CD8-positive, alpha-beta memory T cell (primary cell): ENCODE measurements at regions of chr19 and their contacts with region 1.

Region 1: GRCh38 chr19:12757544-12758274 is 6.1 kb downstream of the BEST2 start:
- DNase-seq: peak; percentile 45 to 65 (median 54)
- H3K4me3 ChIP-seq: no peak overlapping the region
- H3K4me3 Mint-ChIP-seq: peak overlapping the region in 3 of 7 donors; percentile 15 to 50 (median 23)
- H3K27ac ChIP-seq: no peak overlapping the region
- H3K27ac Mint-ChIP-seq: no peak overlapping the region
- H3K4me1 ChIP-seq: peaks cover 9% of the 10 kb centered on the region
- H3K4me1 Mint-ChIP-seq: peaks cover 5 to 8% (median 8%) of the 10 kb centered on the region in 3 donors
- H3K27me3 ChIP-seq: peaks cover 4% of the 10 kb centered on the region
- H3K27me3 Mint-ChIP-seq: peaks cover 19 to 32% of the 10 kb centered on the region in 2 donors

Region 2: DNA sequence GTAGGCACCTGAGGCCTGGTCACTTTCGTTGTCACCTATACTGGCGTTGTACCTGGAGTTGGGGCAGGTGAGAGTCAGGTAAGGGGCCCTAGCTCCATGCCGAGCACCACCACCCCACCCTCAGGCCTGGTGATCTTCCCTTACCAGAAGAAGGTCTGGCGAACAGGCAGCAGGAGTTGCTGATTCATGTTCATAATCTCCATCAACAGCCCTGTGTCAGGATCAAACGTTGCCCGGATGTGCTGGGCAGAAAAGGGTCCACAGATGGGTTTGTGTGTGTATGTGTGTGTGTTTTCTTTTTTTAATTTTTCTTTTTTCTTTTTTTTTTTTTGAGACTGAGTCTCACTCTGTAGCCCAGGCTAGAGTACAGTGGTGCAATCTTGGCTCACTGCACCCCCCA is 105.5 kb before region 1 on chr19:
- CTCF ChIA-PET with region 1: no interaction called
- POLR2A ChIA-PET with region 1: no interaction called
- DNase-seq: no peak
- H3K4me3 ChIP-seq: no peak overlapping the region
- H3K4me3 Mint-ChIP-seq: no peak overlapping the region
- H3K27ac ChIP-seq: no peak overlapping the region
- H3K27ac Mint-ChIP-seq: peak overlapping the region in 1 of 8 donors; percentile 54
- H3K4me1 ChIP-seq: no peaks in the 10 kb centered on the region
- H3K4me1 Mint-ChIP-seq: peaks cover 0 to 1% (median 0%) of the 10 kb centered on the region in 3 donors
- H3K27me3 ChIP-seq: no peaks in the 10 kb centered on the region
- H3K27me3 Mint-ChIP-seq: no peaks in the 10 kb centered on the region

Region 3: GRCh38 chr19:12703046-12703445 is 54.7 kb before region 1 on chr19:
- CTCF ChIA-PET with region 1: no interaction called
- POLR2A ChIA-PET with region 1: no interaction called
- DNase-seq: peak in 1 of 5 donors; percentile 27
- H3K4me3 ChIP-seq: no peak overlapping the region
- H3K4me3 Mint-ChIP-seq: no peak overlapping the region
- H3K27ac ChIP-seq: no peak overlapping the region
- H3K27ac Mint-ChIP-seq: peak overlapping the region in 1 of 8 donors; percentile 23
- H3K4me1 ChIP-seq: no peaks in the 10 kb centered on the region
- H3K4me1 Mint-ChIP-seq: peaks cover 2 to 4% (median 2%) of the 10 kb centered on the region in 3 donors
- H3K27me3 ChIP-seq: no peaks in the 10 kb centered on the region
- H3K27me3 Mint-ChIP-seq: no peaks in the 10 kb centered on the region

Region 4: GRCh38 chr19:12716861-12717260 is 40.8 kb before region 1 on chr19:
- CTCF ChIA-PET with region 1: interaction called, 16 read pairs
- POLR2A ChIA-PET with region 1: no interaction called
- DNase-seq: peak in 3 of 5 donors; percentile 30 to 55 (median 41)
- H3K4me3 ChIP-seq: no peak overlapping the region
- H3K4me3 Mint-ChIP-seq: peak overlapping the region in 1 of 7 donors; percentile 9
- H3K27ac ChIP-seq: no peak overlapping the region
- H3K27ac Mint-ChIP-seq: peak overlapping the region in 3 of 8 donors; percentile 7 to 55 (median 49)
- H3K4me1 ChIP-seq: peaks cover 6% of the 10 kb centered on the region
- H3K4me1 Mint-ChIP-seq: peaks cover 14 to 25% (median 19%) of the 10 kb centered on the region in 3 donors
- H3K27me3 ChIP-seq: no peaks in the 10 kb centered on the region
- H3K27me3 Mint-ChIP-seq: peaks cover 0 to 3% of the 10 kb centered on the region in 2 donors

Region 5: GRCh38 chr19:12745166-12745897 is 12.4 kb before region 1 on chr19:
- CTCF ChIA-PET with region 1: interaction called, 10 read pairs
- POLR2A ChIA-PET with region 1: interaction called, 5 read pairs
- DNase-seq: no peak
- H3K4me3 ChIP-seq: no peak overlapping the region
- H3K4me3 Mint-ChIP-seq: no peak overlapping the region
- H3K27ac ChIP-seq: no peak overlapping the region
- H3K27ac Mint-ChIP-seq: no peak overlapping the region
- H3K4me1 ChIP-seq: no peaks in the 10 kb centered on the region
- H3K4me1 Mint-ChIP-seq: peaks cover 5 to 11% (median 9%) of the 10 kb centered on the region in 3 donors
- H3K27me3 ChIP-seq: no peaks in the 10 kb centered on the region
- H3K27me3 Mint-ChIP-seq: peaks cover 0 to 1% of the 10 kb centered on the region in 2 donors

Region 6: DNA sequence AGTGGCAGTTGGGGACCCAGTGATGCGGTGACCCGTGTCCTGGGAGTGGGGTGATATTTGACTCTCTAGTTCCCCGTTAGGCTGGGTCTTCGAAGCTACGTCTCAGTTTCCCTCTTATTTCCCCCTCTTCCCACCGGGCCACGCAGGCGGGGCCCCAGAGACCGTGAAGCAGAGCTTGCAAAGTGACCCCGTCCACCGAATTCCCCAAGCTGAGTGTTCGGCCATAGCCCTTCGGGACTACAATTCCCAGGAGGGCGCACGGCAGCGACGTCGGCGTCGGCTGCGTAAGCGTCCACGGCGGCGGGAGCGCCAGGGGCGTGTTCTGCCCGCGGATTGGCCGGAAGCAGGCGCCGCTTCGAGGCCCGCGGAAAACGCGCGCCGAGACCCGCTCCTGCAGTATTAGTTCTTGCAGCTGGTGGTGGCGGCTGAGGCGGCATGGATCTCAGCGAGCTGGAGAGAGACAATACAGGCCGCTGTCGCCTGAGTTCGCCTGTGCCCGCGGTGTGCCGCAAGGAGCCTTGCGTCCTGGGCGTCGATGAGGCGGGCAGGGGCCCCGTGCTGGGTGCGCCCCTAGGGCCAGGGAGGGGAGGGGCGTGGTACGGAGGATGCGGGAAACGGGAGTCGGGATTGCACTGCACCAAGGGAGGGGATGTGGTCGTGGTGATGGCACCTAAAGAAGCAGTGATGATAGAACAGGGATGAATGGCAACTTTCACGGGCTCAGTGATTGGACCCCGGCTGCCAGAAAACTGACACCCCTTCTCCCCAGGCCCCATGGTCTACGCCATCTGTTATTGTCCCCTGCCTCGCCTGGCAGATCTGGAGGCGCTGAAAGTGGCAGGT is 48.8 kb after region 1 on chr19 and contains the start of gene RNASEH2A:
- CTCF ChIA-PET with region 1: interaction called, 326 read pairs
- POLR2A ChIA-PET with region 1: no interaction called
- DNase-seq: peak; percentile 79 to 88 (median 81)
- H3K4me3 ChIP-seq: peak within 1 kb of the TSS; percentile 59
- H3K4me3 Mint-ChIP-seq: peak within 1 kb of the TSS; percentile 89 to 95 (median 92)
- H3K27ac ChIP-seq: peak within 1 kb of the TSS; percentile 75
- H3K27ac Mint-ChIP-seq: peak within 1 kb of the TSS; percentile 66 to 94 (median 88)
- H3K4me1 ChIP-seq: peaks cover 20% of the 10 kb centered on the region
- H3K4me1 Mint-ChIP-seq: peaks cover 18 to 25% (median 21%) of the 10 kb centered on the region in 3 donors
- H3K27me3 ChIP-seq: no peaks in the 10 kb centered on the region
- H3K27me3 Mint-ChIP-seq: peaks cover 0 to 4% of the 10 kb centered on the region in 2 donors
- total RNA-seq, gene RNASEH2A: 51.5 to 62.4 TPM